Left ventricle myocardium inferior (tissue), 1 donor: ENCODE measurements at regions of chr17 and their contacts with region 1.

Region 1: GRCh38 chr17:29633886-29634285 is 11.2 kb upstream of the CORO6 start:
- DNase-seq: no peak
- H3K4me3 ChIP-seq: no peak overlapping the region
- H3K27ac ChIP-seq: no peak overlapping the region
- H3K4me1 ChIP-seq: peaks cover 24% of the 10 kb centered on the region
- H3K27me3 ChIP-seq: no peaks in the 10 kb centered on the region
- CTCF ChIP-seq: no peak

Region 2: DNA sequence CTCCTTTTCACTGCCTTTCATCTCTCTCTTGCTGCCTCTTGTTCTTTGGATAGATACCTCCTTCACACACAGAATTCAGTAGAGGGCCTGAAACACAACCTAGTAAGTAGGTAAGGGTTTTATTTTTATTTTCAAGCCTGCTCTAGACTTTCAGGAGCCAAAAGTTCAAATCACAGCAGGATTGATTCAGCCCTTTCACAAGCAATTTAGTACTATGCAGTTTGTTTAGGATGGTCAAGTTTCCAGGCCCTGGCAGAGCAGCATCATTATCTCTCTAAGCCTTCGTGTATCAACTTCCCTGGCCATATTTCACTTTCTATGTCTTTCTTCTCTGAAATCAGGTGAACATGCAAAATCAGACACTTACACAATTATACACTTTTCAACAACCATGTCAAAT is 137.7 kb after region 1 on chr17:
- intact Hi-C with region 1: loop called (anchors 10 kb)
- DNase-seq: no peak
- H3K4me3 ChIP-seq: no peak overlapping the region
- H3K27ac ChIP-seq: no peak overlapping the region
- H3K4me1 ChIP-seq: peaks cover 12% of the 10 kb centered on the region
- H3K27me3 ChIP-seq: no peaks in the 10 kb centered on the region
- CTCF ChIP-seq: no peak